ENCODE measurements at regions of chr12 and their contacts with region 1.

Region 1: GRCh38 chr12:30847259-30847658 is 79.3 kb upstream of the TSPAN11 start:
- DNase-seq: peak in 4 of 14 experiments; percentile 23 to 77 (median 72)
- ATAC-seq: no peak
- H3K4me3 ChIP-seq: no peak overlapping the region
- H3K4me3 Mint-ChIP-seq: no peak overlapping the region
- H3K27ac ChIP-seq: no peak overlapping the region
- H3K27ac Mint-ChIP-seq: no peak overlapping the region
- H3K4me1 ChIP-seq: peaks cover 10% of the 10 kb centered on the region
- H3K4me1 Mint-ChIP-seq: no peaks in the 10 kb centered on the region
- H3K27me3 ChIP-seq: no peaks in the 10 kb centered on the region
- H3K27me3 Mint-ChIP-seq: no peaks in the 10 kb centered on the region
- CTCF ChIP-seq: peak; percentile 65

Region 2: GRCh38 chr12:29073628-29074239 is 1773.5 kb before region 1 on chr12:
- CTCF ChIA-PET with region 1: no interaction called
- POLR2A ChIA-PET with region 1: no interaction called
- intact Hi-C with region 1: loop called in 1 of 2 experiments (anchors 2 kb)
- DNase-seq: peak in 4 of 14 experiments; percentile 21 to 66 (median 60)
- ATAC-seq: peak; percentile 55
- H3K4me3 ChIP-seq: no peak overlapping the region
- H3K4me3 Mint-ChIP-seq: no peak overlapping the region
- H3K27ac ChIP-seq: no peak overlapping the region
- H3K27ac Mint-ChIP-seq: no peak overlapping the region
- H3K4me1 ChIP-seq: no peaks in the 10 kb centered on the region
- H3K4me1 Mint-ChIP-seq: no peaks in the 10 kb centered on the region
- H3K27me3 ChIP-seq: peaks cover 0 to 2% of the 10 kb centered on the region in 2 experiments
- H3K27me3 Mint-ChIP-seq: peaks cover 20% of the 10 kb centered on the region
- CTCF ChIP-seq: peak; percentile 70

Region 3: DNA sequence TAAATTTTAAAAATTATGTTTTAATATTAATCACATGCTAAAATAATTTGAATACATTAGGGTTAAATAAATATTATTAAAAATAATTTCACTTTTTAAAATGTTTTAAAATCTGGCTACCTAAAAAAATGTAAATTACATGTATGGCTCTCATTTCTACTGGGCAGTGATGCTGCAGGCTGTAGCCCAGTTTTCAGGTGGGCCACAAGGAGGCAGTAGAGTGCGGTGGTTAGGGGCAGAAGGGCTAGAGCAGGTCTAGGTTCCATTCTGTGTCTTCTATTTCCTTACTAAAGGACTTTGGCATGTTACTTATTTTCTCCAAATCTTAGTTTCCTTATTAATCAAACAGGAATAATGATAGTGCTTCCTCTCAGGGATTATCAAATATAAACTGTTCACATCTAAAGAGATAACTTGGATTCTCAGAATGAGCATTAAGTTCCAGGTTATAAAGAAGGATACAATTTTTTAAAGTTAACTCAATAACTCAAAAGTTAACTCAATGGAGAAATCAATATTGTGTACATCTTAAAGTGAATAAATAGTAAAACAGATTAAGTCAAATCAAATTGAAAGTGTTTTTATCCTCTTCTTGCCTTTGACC is 1294.8 kb before region 1 on chr12:
- CTCF ChIA-PET with region 1: no interaction called
- POLR2A ChIA-PET with region 1: no interaction called
- intact Hi-C with region 1: loop called (anchors 2 to 10 kb)
- DNase-seq: peak; percentile 37 to 71 (median 48)
- ATAC-seq: peak; percentile 54
- H3K4me3 ChIP-seq: no peak overlapping the region
- H3K4me3 Mint-ChIP-seq: no peak overlapping the region
- H3K27ac ChIP-seq: no peak overlapping the region
- H3K27ac Mint-ChIP-seq: no peak overlapping the region
- H3K4me1 ChIP-seq: no peaks in the 10 kb centered on the region
- H3K4me1 Mint-ChIP-seq: no peaks in the 10 kb centered on the region
- H3K27me3 ChIP-seq: no peaks in the 10 kb centered on the region
- H3K27me3 Mint-ChIP-seq: peaks cover 9% of the 10 kb centered on the region
- CTCF ChIP-seq: peak; percentile 84

Region 4: DNA sequence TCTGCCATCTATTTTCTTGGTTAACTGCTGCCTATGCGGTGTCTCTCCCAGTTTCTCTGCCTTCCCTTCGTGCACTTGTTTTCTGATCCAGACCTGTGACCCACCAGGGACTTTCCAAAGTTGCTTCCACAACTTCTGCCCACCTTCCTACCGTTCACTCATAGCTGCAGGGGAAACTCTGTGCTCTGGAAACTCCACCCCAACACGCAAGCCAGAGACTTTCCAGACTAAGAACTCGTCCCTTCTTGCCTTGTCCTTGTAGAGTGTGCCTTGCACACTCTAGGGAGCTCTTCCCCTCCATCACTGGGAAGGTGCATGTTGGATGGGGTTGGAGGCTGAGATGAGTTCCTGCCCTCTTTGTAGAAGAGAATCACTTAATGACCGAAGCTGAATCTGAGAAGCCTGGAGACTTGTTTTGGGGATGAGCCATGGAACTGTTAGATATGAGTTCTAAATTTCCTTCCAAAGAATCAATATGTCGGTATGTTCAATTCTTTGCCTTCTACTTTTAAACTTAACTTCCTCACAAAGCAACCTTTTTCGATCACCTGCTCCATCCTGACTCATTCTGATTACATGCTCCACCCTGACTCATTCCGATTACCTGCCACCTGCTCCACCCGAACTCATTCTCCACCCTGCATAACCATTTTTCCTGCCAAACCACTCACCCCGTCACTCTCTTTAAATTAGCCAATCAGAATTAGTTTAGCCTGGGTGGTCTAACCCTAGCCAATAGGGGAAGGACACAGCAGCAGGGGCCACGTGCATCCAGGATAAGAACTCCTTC is 10.4 kb before region 1 on chr12:
- CTCF ChIA-PET with region 1: no interaction called
- POLR2A ChIA-PET with region 1: no interaction called
- intact Hi-C with region 1: no loop called
- DNase-seq: no peak
- ATAC-seq: no peak
- H3K4me3 ChIP-seq: no peak overlapping the region
- H3K4me3 Mint-ChIP-seq: no peak overlapping the region
- H3K27ac ChIP-seq: no peak overlapping the region
- H3K27ac Mint-ChIP-seq: no peak overlapping the region
- H3K4me1 ChIP-seq: no peaks in the 10 kb centered on the region
- H3K4me1 Mint-ChIP-seq: no peaks in the 10 kb centered on the region
- H3K27me3 ChIP-seq: peaks cover 9 to 13% of the 10 kb centered on the region in 2 experiments
- H3K27me3 Mint-ChIP-seq: peaks cover 39% of the 10 kb centered on the region
- CTCF ChIP-seq: no peak

Region 5: GRCh38 chr12:30905463-30906009 is 58.3 kb after region 1 on chr12:
- CTCF ChIA-PET with region 1: no interaction called
- POLR2A ChIA-PET with region 1: no interaction called
- intact Hi-C with region 1: no loop called
- DNase-seq: no peak
- ATAC-seq: no peak
- H3K4me3 ChIP-seq: no peak overlapping the region
- H3K4me3 Mint-ChIP-seq: no peak overlapping the region
- H3K27ac ChIP-seq: no peak overlapping the region
- H3K27ac Mint-ChIP-seq: no peak overlapping the region
- H3K4me1 ChIP-seq: no peaks in the 10 kb centered on the region
- H3K4me1 Mint-ChIP-seq: no peaks in the 10 kb centered on the region
- H3K27me3 ChIP-seq: peaks cover 0 to 4% of the 10 kb centered on the region in 2 experiments
- H3K27me3 Mint-ChIP-seq: peaks cover 2% of the 10 kb centered on the region
- CTCF ChIP-seq: no peak

Region 6: GRCh38 chr12:30985814-30986452 is 138.7 kb after region 1 on chr12:
- CTCF ChIA-PET with region 1: interaction called, 6 read pairs
- POLR2A ChIA-PET with region 1: no interaction called
- intact Hi-C with region 1: loop called in 1 of 2 experiments (anchors 5 kb)
- DNase-seq: peak in 2 of 14 experiments; percentile 2 to 7
- ATAC-seq: no peak
- H3K4me3 ChIP-seq: no peak overlapping the region
- H3K4me3 Mint-ChIP-seq: no peak overlapping the region
- H3K27ac ChIP-seq: no peak overlapping the region
- H3K27ac Mint-ChIP-seq: no peak overlapping the region
- H3K4me1 ChIP-seq: no peaks in the 10 kb centered on the region
- H3K4me1 Mint-ChIP-seq: no peaks in the 10 kb centered on the region
- H3K27me3 ChIP-seq: no peaks in the 10 kb centered on the region
- H3K27me3 Mint-ChIP-seq: no peaks in the 10 kb centered on the region
- CTCF ChIP-seq: no peak

Region 7: GRCh38 chr12:31274520-31275300 is 427.5 kb after region 1 on chr12:
- CTCF ChIA-PET with region 1: interaction called, 11 read pairs
- POLR2A ChIA-PET with region 1: no interaction called
- intact Hi-C with region 1: loop called (anchors 1 to 2 kb)
- DNase-seq: no peak
- ATAC-seq: no peak
- H3K4me3 ChIP-seq: no peak overlapping the region
- H3K4me3 Mint-ChIP-seq: no peak overlapping the region
- H3K27ac ChIP-seq: no peak overlapping the region
- H3K27ac Mint-ChIP-seq: no peak overlapping the region
- H3K4me1 ChIP-seq: no peaks in the 10 kb centered on the region
- H3K4me1 Mint-ChIP-seq: peaks cover 6% of the 10 kb centered on the region
- H3K27me3 ChIP-seq: no peaks in the 10 kb centered on the region
- H3K27me3 Mint-ChIP-seq: no peaks in the 10 kb centered on the region
- CTCF ChIP-seq: no peak

Measured in CD4-positive, alpha-beta T cell (primary cell).